PC-9 (cell line): ENCODE measurements at regions of chr1 and their contacts with region 1.

Region 1: GRCh38 chr1:16644193-16644481 is 22.6 kb downstream of the RNU1-3 start:
- DNase-seq: peak in 1 of 2 experiments; percentile 34
- H3K4me3 ChIP-seq: peak overlapping the region; percentile 90
- H3K27ac ChIP-seq: peak overlapping the region; percentile 49; the same call in 1 of the 2 replicates
- H3K4me1 ChIP-seq: peaks cover 17% of the 10 kb centered on the region
- H3K27me3 ChIP-seq: no peaks in the 10 kb centered on the region
- CTCF ChIP-seq: no peak

Region 2: GRCh38 chr1:16613185-16614147 is 30.7 kb before region 1 on chr1 and contains the start of gene NBPF1:
- CTCF ChIA-PET with region 1: no interaction called
- POLR2A ChIA-PET with region 1: no interaction called
- intact Hi-C with region 1: loop called (anchors 2 kb)
- DNase-seq: peak; percentile 75 to 95
- H3K4me3 ChIP-seq: peak within 1 kb of the TSS; percentile 65
- H3K27ac ChIP-seq: no peak within 1 kb of the TSS
- H3K4me1 ChIP-seq: peaks cover 18% of the 10 kb centered on the region
- H3K27me3 ChIP-seq: no peaks in the 10 kb centered on the region
- CTCF ChIP-seq: no peak
- total RNA-seq, gene NBPF1: 45.4 and 45.6 TPM in 2 replicates